BJ (cell line): ENCODE measurements at regions of chr1 and their contacts with region 1.

Region 1: DNA sequence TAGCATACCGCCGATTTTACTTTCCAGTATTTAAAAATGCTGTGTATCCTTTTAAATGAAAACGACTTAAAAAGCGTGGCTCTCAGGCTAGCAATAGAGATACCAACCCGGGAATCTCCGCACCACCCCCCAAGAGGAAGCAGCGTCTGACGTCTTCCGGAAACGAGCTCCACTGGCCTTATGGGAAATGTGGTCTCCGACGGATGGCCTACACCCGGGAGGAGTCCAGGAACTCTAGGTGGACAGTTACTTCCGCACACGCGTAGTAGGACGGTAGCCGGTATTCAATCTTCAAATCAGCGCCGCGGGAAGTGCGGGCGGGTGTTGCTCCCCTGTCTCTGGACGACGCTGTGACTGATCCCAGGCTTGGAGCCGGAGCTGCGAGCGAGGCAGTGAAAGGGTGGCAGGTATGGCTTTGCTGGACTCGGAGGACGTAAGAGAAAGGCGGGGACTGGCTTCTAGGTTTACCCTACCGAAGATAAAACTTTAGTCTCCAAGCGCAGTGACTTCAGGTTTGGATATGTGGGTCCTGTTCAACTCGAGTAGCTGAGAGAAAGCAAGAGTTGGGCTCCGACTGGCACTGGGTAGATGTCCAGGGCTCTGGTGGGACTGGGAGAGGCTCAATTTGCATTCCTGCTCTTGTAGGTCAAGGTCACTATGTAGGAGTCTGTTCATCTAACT is at the start of gene ZNF684:
- DNase-seq: peak; percentile 82
- H3K4me3 ChIP-seq: peak within 1 kb of the TSS; percentile 79
- H3K27me3 ChIP-seq: no peaks in the 10 kb centered on the region
- CTCF ChIP-seq: no peak
- polyA plus RNA-seq, gene ZNF684: 1.4 and 2.6 TPM in 2 replicates

Region 2: GRCh38 chr1:40553017-40553416 is 21.5 kb after region 1 on chr1:
- CTCF ChIA-PET with region 1: interaction called, 16 read pairs
- POLR2A ChIA-PET with region 1: no interaction called
- DNase-seq: no peak
- H3K4me3 ChIP-seq: no peak overlapping the region
- H3K27me3 ChIP-seq: no peaks in the 10 kb centered on the region
- CTCF ChIP-seq: no peak